Activated naive CD4-positive, alpha-beta T cell treated with anti-CD3 and anti-CD28 coated beads for 36 hours (primary cell): ENCODE measurements at regions of chr1 and their contacts with region 1.

Region 1: DNA sequence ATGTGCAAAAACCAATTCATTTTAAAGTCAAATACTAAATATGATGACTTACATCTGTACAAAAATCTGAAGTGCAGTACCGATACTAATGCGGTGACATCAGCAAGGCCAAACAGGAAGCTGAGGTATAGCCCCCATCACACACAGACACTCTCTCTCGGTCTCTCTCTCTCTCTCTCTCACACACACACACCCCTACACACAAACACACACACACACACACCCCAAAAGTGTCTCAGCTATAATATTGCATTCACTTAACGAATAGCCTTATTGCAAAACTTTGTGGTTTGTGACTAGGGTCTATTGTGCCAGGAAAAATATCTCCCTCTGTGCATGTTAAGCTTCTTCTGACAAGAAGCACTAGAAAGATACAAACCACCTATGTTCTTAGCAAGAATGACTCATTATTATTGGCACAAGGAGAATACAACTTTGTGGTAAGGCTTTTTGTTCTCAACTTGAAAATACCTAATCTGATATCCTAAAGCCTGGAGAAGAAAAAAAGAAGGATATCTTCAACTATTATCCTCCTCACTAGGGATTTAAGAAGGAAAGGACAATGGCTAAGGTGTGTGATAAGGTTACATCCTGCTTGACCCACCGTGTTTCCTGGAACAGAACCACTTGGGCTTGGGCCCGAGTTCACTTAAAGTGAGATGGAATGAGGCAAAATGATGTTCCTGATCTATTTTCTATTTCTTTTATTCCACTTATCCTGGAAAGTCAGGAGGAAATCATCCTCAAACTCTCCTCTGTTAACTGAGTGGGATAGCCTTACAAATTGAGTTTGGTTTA is 107.1 kb downstream of the NIBAN1 start:
- DNase-seq: peak; percentile 80
- H3K4me3 Mint-ChIP-seq: peak overlapping the region; percentile 14
- H3K27ac Mint-ChIP-seq: peak overlapping the region; percentile 94
- H3K4me1 Mint-ChIP-seq: peaks cover 32% of the 10 kb centered on the region
- H3K27me3 Mint-ChIP-seq: peaks cover 10% of the 10 kb centered on the region

Region 2: GRCh38 chr1:183956559-183957188 is 910.5 kb before region 1 on chr1:
- CTCF ChIA-PET with region 1: no interaction called
- intact Hi-C with region 1: loop called (anchors 10 kb)
- DNase-seq: peak; percentile 71
- H3K4me3 Mint-ChIP-seq: no peak overlapping the region
- H3K27ac Mint-ChIP-seq: peak overlapping the region; percentile 86
- H3K4me1 Mint-ChIP-seq: no peaks in the 10 kb centered on the region
- H3K27me3 Mint-ChIP-seq: no peaks in the 10 kb centered on the region

Region 3: DNA sequence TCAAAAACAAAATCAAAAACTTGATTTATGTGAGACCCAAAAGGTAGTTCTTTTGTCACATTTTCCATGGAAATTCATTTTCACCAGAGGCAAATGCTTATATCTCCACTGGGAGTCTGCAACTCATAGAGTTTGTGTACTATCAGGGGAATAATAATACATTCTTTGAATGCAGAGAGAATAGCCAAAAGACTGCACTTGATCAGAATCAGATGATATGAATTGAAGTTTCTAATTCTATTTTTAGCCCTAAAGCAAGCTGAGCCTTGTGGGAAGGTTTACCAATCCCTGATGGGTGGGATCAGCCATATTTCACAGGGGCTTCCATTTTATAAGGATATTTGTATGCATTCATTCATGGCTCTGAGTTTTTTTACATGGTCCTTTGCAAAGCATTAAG is 766.0 kb before region 1 on chr1:
- CTCF ChIA-PET with region 1: no interaction called
- intact Hi-C with region 1: no loop called
- DNase-seq: no peak
- H3K4me3 Mint-ChIP-seq: no peak overlapping the region
- H3K27ac Mint-ChIP-seq: no peak overlapping the region
- H3K4me1 Mint-ChIP-seq: no peaks in the 10 kb centered on the region
- H3K27me3 Mint-ChIP-seq: no peaks in the 10 kb centered on the region

Region 4: DNA sequence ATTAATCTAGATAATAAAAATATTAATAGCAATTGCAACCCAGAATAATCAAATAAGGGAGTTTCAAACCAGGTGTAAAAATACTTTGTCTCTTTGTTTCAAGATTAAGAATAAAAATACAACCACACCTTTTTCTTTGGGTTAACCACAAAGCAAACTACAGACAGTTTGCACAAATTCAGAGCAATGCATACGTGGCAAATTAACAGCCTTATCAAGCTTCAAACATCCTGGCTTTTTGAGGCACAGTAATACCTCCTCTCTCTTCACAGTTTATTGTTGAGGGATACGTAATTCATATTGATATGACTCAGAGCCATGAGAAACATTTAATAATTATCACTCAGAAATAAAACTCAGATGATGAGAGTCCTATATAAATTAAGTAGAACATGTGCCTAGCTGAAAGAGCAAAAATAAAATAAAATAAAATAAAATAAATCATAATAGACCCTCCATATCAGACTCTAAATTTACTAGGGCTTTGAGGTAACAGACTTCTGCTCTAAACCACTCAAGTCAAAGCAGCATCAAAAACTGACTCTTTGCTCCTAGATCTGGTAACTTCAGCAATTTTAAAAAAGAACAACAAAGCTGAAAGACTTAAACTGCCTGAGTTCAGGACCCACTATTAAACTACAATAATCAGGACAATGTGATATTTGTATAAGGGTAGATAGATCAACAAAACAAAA is 124.0 kb before region 1 on chr1:
- CTCF ChIA-PET with region 1: no interaction called
- intact Hi-C with region 1: loop called (anchors 2 kb)
- DNase-seq: peak; percentile 18
- H3K4me3 Mint-ChIP-seq: no peak overlapping the region
- H3K27ac Mint-ChIP-seq: peak overlapping the region; percentile 43
- H3K4me1 Mint-ChIP-seq: peaks cover 53% of the 10 kb centered on the region
- H3K27me3 Mint-ChIP-seq: no peaks in the 10 kb centered on the region

Region 5: GRCh38 chr1:184881941-184882913 is 15.0 kb after region 1 on chr1:
- CTCF ChIA-PET with region 1: interaction called, 4 read pairs
- intact Hi-C with region 1: loop called (anchors 1 kb)
- DNase-seq: peak; percentile 31
- H3K4me3 Mint-ChIP-seq: no peak overlapping the region
- H3K27ac Mint-ChIP-seq: peak overlapping the region; percentile 79
- H3K4me1 Mint-ChIP-seq: peaks cover 25% of the 10 kb centered on the region
- H3K27me3 Mint-ChIP-seq: peaks cover 25% of the 10 kb centered on the region

Region 6: DNA sequence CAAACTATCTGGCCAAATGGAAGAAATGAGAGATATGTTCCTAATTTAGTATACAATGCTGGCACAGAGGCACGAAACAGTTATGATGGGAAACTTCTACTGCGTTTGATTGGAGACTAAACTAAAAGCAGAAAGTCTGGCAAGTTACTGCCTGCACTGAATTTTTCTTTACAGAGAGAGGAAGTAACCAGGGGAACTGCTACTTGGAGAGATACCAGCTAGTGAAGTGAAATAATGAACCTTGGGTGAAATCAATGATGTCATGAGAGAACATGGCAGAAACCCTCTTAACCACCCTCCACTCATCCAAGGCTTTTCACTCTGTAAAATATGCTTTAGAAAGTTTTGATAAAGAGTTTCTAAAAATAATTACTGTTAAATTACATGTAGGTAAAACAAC is 77.8 kb after region 1 on chr1:
- CTCF ChIA-PET with region 1: interaction called, 3 read pairs
- intact Hi-C with region 1: loop called (anchors 1 kb)
- DNase-seq: no peak
- H3K4me3 Mint-ChIP-seq: no peak overlapping the region
- H3K27ac Mint-ChIP-seq: no peak overlapping the region
- H3K4me1 Mint-ChIP-seq: peaks cover 30% of the 10 kb centered on the region
- H3K27me3 Mint-ChIP-seq: peaks cover 13% of the 10 kb centered on the region

Region 7: DNA sequence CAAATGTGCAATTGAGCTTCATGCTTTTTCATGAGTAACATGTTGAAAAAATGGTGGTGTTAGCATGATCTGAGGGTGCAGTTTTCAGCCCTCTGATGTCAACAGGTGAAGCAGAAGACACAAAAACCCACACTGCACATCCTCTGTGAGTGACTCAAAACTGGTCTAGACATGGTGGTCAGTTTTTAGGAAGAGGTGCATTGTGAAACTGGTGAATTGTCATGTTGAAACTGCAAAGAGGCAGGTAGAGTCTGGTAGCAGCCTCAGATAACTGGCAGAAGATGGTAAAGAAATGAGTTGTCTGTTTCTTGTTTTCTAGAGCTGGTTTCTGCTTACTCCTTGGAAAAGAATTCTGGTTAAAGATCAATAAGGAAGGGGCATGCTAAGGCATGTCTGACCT is 769.7 kb after region 1 on chr1:
- CTCF ChIA-PET with region 1: no interaction called
- intact Hi-C with region 1: loop called (anchors 1 kb)
- DNase-seq: peak; percentile 55
- H3K4me3 Mint-ChIP-seq: no peak overlapping the region
- H3K27ac Mint-ChIP-seq: peak overlapping the region; percentile 40
- H3K4me1 Mint-ChIP-seq: peaks cover 12% of the 10 kb centered on the region
- H3K27me3 Mint-ChIP-seq: peaks cover 6% of the 10 kb centered on the region